PC-9 (cell line): ENCODE measurements at regions of chr20 and their contacts with region 1.

Region 1: GRCh38 chr20:43456809-43457639 is 672 bp upstream of the SRSF6 start:
- DNase-seq: peak; percentile 80 to 86
- H3K4me3 ChIP-seq: peak overlapping the region; percentile 100
- H3K27ac ChIP-seq: peak overlapping the region; percentile 99
- H3K4me1 ChIP-seq: peaks cover 14% of the 10 kb centered on the region
- H3K27me3 ChIP-seq: peaks cover 7% of the 10 kb centered on the region
- CTCF ChIP-seq: no peak

Region 2: GRCh38 chr20:41617931-41618806 is 1838.9 kb before region 1 on chr20 and contains the start of gene CHD6:
- CTCF ChIA-PET with region 1: no interaction called
- POLR2A ChIA-PET with region 1: interaction called, 13 read pairs
- intact Hi-C with region 1: no loop called
- DNase-seq: peak; percentile 99 to 100
- H3K4me3 ChIP-seq: peak within 1 kb of the TSS; percentile 94
- H3K27ac ChIP-seq: peak within 1 kb of the TSS; percentile 51; the same call in 1 of the 2 replicates
- H3K4me1 ChIP-seq: peaks cover 19% of the 10 kb centered on the region
- H3K27me3 ChIP-seq: no peaks in the 10 kb centered on the region; the same call in 1 of the 2 replicates
- CTCF ChIP-seq: no peak
- total RNA-seq, gene CHD6: 48.6 and 51.1 TPM in 2 replicates

Region 3: GRCh38 chr20:43379578-43379917 is 77.5 kb before region 1 on chr20:
- CTCF ChIA-PET with region 1: no interaction called
- POLR2A ChIA-PET with region 1: no interaction called
- intact Hi-C with region 1: no loop called
- DNase-seq: no peak
- H3K4me3 ChIP-seq: no peak overlapping the region
- H3K27ac ChIP-seq: no peak overlapping the region
- H3K4me1 ChIP-seq: no peaks in the 10 kb centered on the region
- H3K27me3 ChIP-seq: peaks cover 97% of the 10 kb centered on the region
- CTCF ChIP-seq: no peak

Region 4: DNA sequence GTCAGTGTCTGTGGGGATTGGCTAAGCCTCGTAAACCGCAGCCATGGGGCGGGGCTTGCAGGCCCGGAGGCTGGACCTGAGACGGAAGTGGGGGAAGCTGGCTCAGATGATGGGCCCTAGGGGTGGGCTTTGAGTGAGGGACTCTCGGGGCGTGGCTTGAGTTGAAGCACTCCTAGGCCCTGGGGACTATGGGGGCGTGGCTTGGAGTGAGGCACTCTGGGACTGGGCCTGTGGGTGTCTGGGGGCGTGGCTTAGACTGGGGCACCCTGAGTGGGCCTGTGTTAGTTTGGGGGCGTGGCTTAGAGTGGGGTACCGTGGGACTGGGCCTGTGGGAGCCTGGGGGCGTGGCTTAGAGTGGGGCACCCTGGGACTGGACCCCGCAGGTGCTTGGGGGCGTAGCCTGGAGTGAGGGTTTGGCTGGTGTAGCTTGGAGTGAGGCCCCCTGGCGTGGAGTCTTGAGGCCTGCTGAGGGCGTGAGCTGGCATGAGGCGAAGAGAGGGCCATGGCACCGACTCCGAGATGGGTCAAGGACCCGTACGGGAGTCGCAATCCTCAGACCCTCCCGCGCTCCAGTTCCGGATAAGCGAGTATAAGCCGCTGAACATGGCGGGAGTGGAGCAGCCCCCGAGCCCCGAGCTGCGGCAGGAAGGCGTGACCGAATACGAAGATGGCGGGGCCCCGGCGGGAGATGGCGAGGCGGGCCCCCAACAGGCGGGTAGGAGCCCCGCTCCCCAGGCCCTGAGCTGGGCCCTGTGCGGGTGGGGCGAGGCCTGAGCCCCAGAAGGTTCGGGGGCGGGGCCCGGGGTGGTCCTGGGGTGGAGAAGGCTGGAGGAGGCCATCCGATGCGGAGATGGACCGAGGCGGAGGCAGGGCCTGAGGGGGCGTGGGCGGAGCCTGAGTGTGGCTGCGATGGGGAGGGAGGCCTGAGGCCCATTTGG is 57.3 kb after region 1 on chr20:
- CTCF ChIA-PET with region 1: interaction called, 10 read pairs
- POLR2A ChIA-PET with region 1: interaction called, 10 read pairs
- intact Hi-C with region 1: loop called (anchors 1 kb)
- DNase-seq: peak; percentile 97 to 99
- H3K4me3 ChIP-seq: peak overlapping the region; percentile 60
- H3K27ac ChIP-seq: no peak overlapping the region
- H3K4me1 ChIP-seq: peaks cover 10% of the 10 kb centered on the region; the same call in 1 of the 2 replicates
- H3K27me3 ChIP-seq: no peaks in the 10 kb centered on the region
- CTCF ChIP-seq: peak; percentile 53

Region 5: DNA sequence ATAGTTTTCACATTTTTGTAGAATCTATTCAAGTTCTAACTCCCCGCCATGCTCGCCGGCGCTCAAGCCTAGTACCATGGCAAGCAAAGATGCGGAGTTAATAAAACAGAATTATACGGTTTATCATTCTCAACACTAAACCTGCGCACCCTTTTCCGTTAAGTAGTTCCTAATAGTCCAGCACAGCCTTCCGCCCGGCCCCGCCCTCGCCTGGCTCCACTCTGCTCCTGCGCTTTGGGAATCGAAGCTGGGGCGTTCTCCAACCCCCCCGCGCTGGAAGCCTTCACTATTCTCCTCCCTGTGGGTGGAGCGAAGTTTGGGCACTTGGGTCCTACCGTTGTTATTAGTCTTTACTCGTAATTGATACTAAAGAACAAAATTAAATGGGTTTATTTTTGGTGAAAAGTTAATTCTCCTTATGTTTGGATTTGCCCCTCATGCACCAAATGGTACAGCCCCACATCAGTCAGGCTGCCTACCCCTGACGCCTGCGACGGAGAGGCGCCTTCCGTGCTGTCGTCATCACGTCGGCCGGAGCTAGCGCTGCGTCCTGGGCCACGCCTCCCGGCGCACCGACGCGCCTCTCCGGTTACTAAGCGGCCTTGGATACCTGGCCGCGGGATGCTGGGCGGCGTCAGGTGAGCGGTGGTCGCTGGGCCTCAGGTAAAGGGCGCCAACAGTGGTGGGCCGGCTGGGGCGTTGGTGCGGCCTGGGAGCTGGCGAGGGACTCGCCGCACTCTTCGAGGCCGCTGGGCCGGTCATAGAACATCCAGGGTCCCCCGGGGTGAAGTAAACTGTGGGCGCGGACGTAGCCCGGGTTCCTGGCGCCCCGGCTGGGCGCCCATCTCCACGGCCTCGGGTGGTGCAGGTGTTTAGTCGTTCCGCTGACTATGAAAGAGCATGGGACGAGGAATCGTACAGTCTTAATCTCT is 133.6 kb after region 1 on chr20 and contains the start of gene IFT52:
- CTCF ChIA-PET with region 1: no interaction called
- POLR2A ChIA-PET with region 1: interaction called, 18 read pairs
- intact Hi-C with region 1: loop called (anchors 5 kb)
- DNase-seq: peak; percentile 87 to 93
- H3K4me3 ChIP-seq: peak within 1 kb of the TSS; percentile 81
- H3K27ac ChIP-seq: peak within 1 kb of the TSS; percentile 44
- H3K4me1 ChIP-seq: peaks cover 19% of the 10 kb centered on the region
- H3K27me3 ChIP-seq: no peaks in the 10 kb centered on the region
- CTCF ChIP-seq: no peak
- total RNA-seq, gene IFT52: 43.2 and 46.4 TPM in 2 replicates

Region 6: GRCh38 chr20:43666376-43667328 is 209.6 kb after region 1 on chr20 and contains the start of gene MYBL2:
- CTCF ChIA-PET with region 1: no interaction called
- POLR2A ChIA-PET with region 1: interaction called, 3 read pairs
- intact Hi-C with region 1: loop called (anchors 5 kb)
- DNase-seq: peak; percentile 40 to 72
- H3K4me3 ChIP-seq: peak within 1 kb of the TSS; percentile 70
- H3K27ac ChIP-seq: no peak within 1 kb of the TSS
- H3K4me1 ChIP-seq: peaks cover 33% of the 10 kb centered on the region
- H3K27me3 ChIP-seq: no peaks in the 10 kb centered on the region
- CTCF ChIP-seq: no peak
- total RNA-seq, gene MYBL2: 124 and 152 TPM in 2 replicates

Region 7: DNA sequence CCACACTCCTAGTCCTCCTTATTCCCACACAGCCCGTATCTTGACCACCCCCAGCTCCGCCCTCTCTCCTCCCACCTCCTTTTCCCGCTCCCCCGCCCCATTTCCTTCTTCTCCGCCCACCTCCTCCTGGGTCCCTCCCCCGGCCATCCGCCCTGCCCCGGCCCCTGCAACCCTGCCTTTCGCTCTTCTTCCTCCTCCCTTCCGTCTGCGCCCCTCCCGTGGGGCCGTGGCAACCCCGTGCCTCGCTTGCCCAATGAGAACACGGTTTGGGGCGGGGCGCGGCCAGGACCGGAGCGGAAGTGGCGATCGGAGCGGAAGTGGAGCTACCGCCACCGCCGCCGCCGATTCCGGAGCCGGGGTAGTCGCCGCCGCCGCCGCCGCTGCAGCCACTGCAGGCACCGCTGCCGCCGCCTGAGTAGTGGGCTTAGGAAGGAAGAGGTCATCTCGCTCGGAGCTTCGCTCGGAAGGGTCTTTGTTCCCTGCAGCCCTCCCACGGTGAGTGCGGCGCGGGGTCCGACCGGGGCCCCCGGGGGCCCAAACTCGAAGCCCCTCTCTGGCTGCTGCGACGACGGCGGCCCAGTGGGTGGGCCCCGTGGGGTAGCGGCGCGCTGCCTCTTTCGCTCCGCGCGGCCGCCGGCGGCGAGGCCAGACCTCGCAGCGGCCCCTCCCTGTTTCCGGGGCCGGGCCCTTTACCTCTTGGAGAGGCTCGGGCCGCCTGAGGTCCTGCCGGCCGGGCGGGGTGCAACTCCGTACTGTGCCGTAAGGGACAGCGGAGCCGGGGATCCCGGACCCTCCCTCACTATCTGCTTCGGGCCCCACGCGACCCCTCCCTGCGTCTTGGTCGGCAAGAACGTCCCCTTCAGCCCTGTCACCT is 1428.6 kb after region 1 on chr20 and contains the start of gene YWHAB:
- CTCF ChIA-PET with region 1: no interaction called
- POLR2A ChIA-PET with region 1: interaction called, 23 read pairs
- intact Hi-C with region 1: no loop called
- DNase-seq: peak; percentile 94 to 99
- H3K4me3 ChIP-seq: peak within 1 kb of the TSS; percentile 94
- H3K27ac ChIP-seq: peak within 1 kb of the TSS; percentile 81
- H3K4me1 ChIP-seq: peaks cover 42% of the 10 kb centered on the region
- H3K27me3 ChIP-seq: no peaks in the 10 kb centered on the region
- CTCF ChIP-seq: peak; percentile 40; the same call in 1 of the 2 replicates
- total RNA-seq, gene YWHAB: 194 and 249 TPM in 2 replicates